ENCODE measurements at regions of chr15 and their contacts with region 1.

Region 1: GRCh38 chr15:92831655-92832328 is 68.3 kb upstream of the CHD2 start:
- DNase-seq: peak; percentile 53 to 98 (median 86)
- ATAC-seq: peak; percentile 94
- H3K4me3 ChIP-seq: peak overlapping the region; percentile 21
- H3K4me3 Mint-ChIP-seq: peak overlapping the region; percentile 74 to 91 (median 81)
- H3K27ac ChIP-seq: peak overlapping the region; percentile 81
- H3K27ac Mint-ChIP-seq: peak overlapping the region; percentile 92 to 98 (median 97)
- H3K4me1 ChIP-seq: peaks cover 31 to 53% of the 10 kb centered on the region in 2 donors
- H3K4me1 Mint-ChIP-seq: peaks cover 26 to 61% (median 50%) of the 10 kb centered on the region in 7 donors
- H3K27me3 ChIP-seq: no peaks in the 10 kb centered on the region
- H3K27me3 Mint-ChIP-seq: no peaks in the 10 kb centered on the region

Region 2: DNA sequence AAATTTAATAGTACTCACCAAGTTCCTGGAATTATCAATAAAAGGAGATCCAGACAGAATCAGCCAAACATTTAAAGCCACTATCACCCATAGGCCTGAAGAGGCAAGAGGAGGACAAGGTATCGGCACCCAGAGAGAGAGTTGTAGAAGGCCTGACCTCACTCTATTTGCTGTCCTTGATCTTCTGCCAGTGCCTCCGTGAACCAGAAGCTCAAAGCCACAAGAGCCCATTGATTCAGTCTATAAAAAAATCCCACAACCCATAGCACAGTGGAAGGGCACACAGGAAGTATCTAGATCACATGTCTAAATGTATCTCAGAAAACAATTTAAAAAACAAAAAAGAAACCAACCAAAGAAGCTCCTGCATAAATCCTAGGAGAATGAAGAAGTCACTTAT is 107.6 kb before region 1 on chr15:
- CTCF ChIA-PET with region 1: no interaction called
- POLR2A ChIA-PET with region 1: no interaction called
- intact Hi-C with region 1: no loop called
- DNase-seq: peak in 5 of 9 donors; percentile 3 to 59 (median 41)
- ATAC-seq: no peak
- H3K4me3 ChIP-seq: no peak overlapping the region
- H3K4me3 Mint-ChIP-seq: peak overlapping the region in 3 of 10 donors; percentile 1 to 64 (median 19)
- H3K27ac ChIP-seq: no peak overlapping the region
- H3K27ac Mint-ChIP-seq: peak overlapping the region in 3 of 9 donors; percentile 2 to 59 (median 43)
- H3K4me1 ChIP-seq: peaks cover 0 to 5% of the 10 kb centered on the region in 2 donors
- H3K4me1 Mint-ChIP-seq: peaks cover 4 to 24% (median 11%) of the 10 kb centered on the region in 7 donors
- H3K27me3 ChIP-seq: no peaks in the 10 kb centered on the region
- H3K27me3 Mint-ChIP-seq: peaks cover 0 to 10% (median 5%) of the 10 kb centered on the region in 5 donors

Region 3: GRCh38 chr15:92797168-92797951 is 34.4 kb before region 1 on chr15:
- CTCF ChIA-PET with region 1: interaction called, 8 read pairs
- POLR2A ChIA-PET with region 1: interaction called, 11 read pairs
- intact Hi-C with region 1: no loop called
- DNase-seq: peak in 7 of 9 donors; percentile 61 to 81 (median 74)
- ATAC-seq: peak; percentile 95
- H3K4me3 ChIP-seq: no peak overlapping the region
- H3K4me3 Mint-ChIP-seq: peak overlapping the region in 1 of 10 donors; percentile 12
- H3K27ac ChIP-seq: no peak overlapping the region
- H3K27ac Mint-ChIP-seq: peak overlapping the region; percentile 72 to 95 (median 79)
- H3K4me1 ChIP-seq: peaks cover 3 to 4% of the 10 kb centered on the region in 2 donors
- H3K4me1 Mint-ChIP-seq: peaks cover 6 to 23% (median 12%) of the 10 kb centered on the region in 7 donors
- H3K27me3 ChIP-seq: no peaks in the 10 kb centered on the region
- H3K27me3 Mint-ChIP-seq: no peaks in the 10 kb centered on the region

Region 4: GRCh38 chr15:92820236-92821021 is 11.4 kb before region 1 on chr15:
- CTCF ChIA-PET with region 1: interaction called, 8 read pairs
- POLR2A ChIA-PET with region 1: interaction called, 253 read pairs
- intact Hi-C with region 1: loop called (anchors 1 kb)
- DNase-seq: peak; percentile 74 to 90 (median 86)
- ATAC-seq: peak; percentile 95
- H3K4me3 ChIP-seq: peak overlapping the region; percentile 76
- H3K4me3 Mint-ChIP-seq: peak overlapping the region; percentile 63 to 93 (median 88)
- H3K27ac ChIP-seq: peak overlapping the region; percentile 86
- H3K27ac Mint-ChIP-seq: peak overlapping the region; percentile 78 to 98 (median 91)
- H3K4me1 ChIP-seq: peaks cover 16 to 47% of the 10 kb centered on the region in 2 donors
- H3K4me1 Mint-ChIP-seq: peaks cover 25 to 74% (median 70%) of the 10 kb centered on the region in 7 donors
- H3K27me3 ChIP-seq: no peaks in the 10 kb centered on the region
- H3K27me3 Mint-ChIP-seq: no peaks in the 10 kb centered on the region

Region 5: GRCh38 chr15:92845126-92845508 is 13.3 kb after region 1 on chr15:
- CTCF ChIA-PET with region 1: interaction called, 3 read pairs
- POLR2A ChIA-PET with region 1: interaction called, 104 read pairs
- intact Hi-C with region 1: loop called (anchors 1 kb)
- DNase-seq: peak in 7 of 9 donors; percentile 66 to 83 (median 73)
- ATAC-seq: peak; percentile 66
- H3K4me3 ChIP-seq: peak overlapping the region; percentile 11
- H3K4me3 Mint-ChIP-seq: peak overlapping the region; percentile 56 to 95 (median 82)
- H3K27ac ChIP-seq: peak overlapping the region; percentile 72
- H3K27ac Mint-ChIP-seq: peak overlapping the region; percentile 93 to 99 (median 97)
- H3K4me1 ChIP-seq: peaks cover 21 to 78% of the 10 kb centered on the region in 2 donors
- H3K4me1 Mint-ChIP-seq: peaks cover 41 to 91% (median 81%) of the 10 kb centered on the region in 7 donors
- H3K27me3 ChIP-seq: no peaks in the 10 kb centered on the region
- H3K27me3 Mint-ChIP-seq: no peaks in the 10 kb centered on the region

Region 6: DNA sequence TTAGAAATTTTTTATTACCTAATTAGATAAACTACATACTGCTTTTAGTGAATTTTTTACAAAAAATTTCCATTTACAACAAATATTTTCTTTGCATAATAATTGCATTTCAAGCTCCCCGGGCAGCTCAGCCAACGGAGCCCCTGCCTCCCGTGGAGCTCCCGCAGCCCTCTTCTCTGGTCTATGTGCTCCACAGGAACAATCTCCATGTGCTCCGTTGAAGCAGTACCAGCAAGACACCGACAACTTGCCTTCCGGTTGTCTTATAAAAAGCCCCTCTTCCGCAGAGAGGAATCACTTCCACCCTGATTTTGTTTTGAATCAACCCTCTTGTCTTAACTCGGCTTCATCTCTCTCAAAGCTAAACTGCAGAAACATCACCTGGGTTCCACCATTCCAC is 21.4 kb after region 1 on chr15:
- CTCF ChIA-PET with region 1: interaction called, 3 read pairs
- POLR2A ChIA-PET with region 1: interaction called, 35 read pairs
- intact Hi-C with region 1: loop called (anchors 1 kb)
- DNase-seq: no peak
- ATAC-seq: no peak
- H3K4me3 ChIP-seq: no peak overlapping the region
- H3K4me3 Mint-ChIP-seq: peak overlapping the region in 6 of 10 donors; percentile 22 to 78 (median 50)
- H3K27ac ChIP-seq: no peak overlapping the region
- H3K27ac Mint-ChIP-seq: peak overlapping the region in 5 of 9 donors; percentile 3 to 93 (median 59)
- H3K4me1 ChIP-seq: peaks cover 6 to 39% of the 10 kb centered on the region in 2 donors
- H3K4me1 Mint-ChIP-seq: peaks cover 18 to 54% (median 41%) of the 10 kb centered on the region in 7 donors
- H3K27me3 ChIP-seq: no peaks in the 10 kb centered on the region
- H3K27me3 Mint-ChIP-seq: no peaks in the 10 kb centered on the region

Region 7: GRCh38 chr15:93417631-93418030 is 585.8 kb after region 1 on chr15:
- CTCF ChIA-PET with region 1: no interaction called
- POLR2A ChIA-PET with region 1: no interaction called
- intact Hi-C with region 1: no loop called
- DNase-seq: no peak
- ATAC-seq: no peak
- H3K4me3 ChIP-seq: no peak overlapping the region
- H3K4me3 Mint-ChIP-seq: no peak overlapping the region
- H3K27ac ChIP-seq: no peak overlapping the region
- H3K27ac Mint-ChIP-seq: no peak overlapping the region
- H3K4me1 ChIP-seq: no peaks in the 10 kb centered on the region
- H3K4me1 Mint-ChIP-seq: no peaks in the 10 kb centered on the region
- H3K27me3 ChIP-seq: no peaks in the 10 kb centered on the region
- H3K27me3 Mint-ChIP-seq: peaks cover 0 to 16% (median 8%) of the 10 kb centered on the region in 5 donors

Measured in naive thymus-derived CD4-positive, alpha-beta T cell (primary cell).